GM12878 (cell line): ENCODE measurements at regions of chr12 and their contacts with region 1.

Region 1: DNA sequence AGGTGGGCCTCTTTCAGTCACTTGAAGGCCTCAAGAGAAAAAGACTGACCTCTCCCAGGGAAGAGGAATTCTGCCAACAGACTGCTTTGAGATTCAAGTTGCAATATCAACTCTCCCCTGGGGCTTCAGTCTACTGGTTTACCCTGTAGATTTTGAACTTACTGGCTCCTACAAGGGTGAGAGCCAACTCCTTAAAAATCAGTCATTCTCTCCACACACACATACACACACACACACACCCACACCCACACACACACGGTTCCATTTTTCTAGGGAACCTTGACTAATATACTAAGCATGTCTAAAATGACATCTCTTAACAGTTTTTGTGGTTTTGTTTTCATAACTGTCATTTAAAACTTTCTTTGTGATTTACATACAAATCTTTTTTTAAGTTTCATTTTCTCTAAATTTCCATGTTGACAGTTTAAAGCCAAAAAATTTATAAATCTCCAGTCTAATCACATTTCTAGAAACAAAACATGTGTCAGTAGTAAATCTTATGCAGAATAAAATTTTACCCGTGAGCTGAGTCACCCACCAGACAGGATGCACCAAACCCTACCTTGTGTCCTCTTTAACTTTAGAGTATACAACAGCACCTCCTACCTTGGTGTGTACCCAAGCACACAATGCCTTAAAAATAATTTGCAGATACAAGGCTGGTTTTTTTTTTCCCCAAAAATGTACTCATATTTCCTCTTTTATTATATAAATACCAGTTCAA is 394.6 kb downstream of the AEBP2 start:
- DNase-seq: no peak
- ATAC-seq: peak; percentile 86
- H3K4me3 ChIP-seq: no peak overlapping the region
- H3K27ac ChIP-seq: no peak overlapping the region
- H3K4me1 ChIP-seq: no peaks in the 10 kb centered on the region
- H3K27me3 ChIP-seq: no peaks in the 10 kb centered on the region
- CTCF ChIP-seq: no peak
- EP300 ChIP-seq: 0 out of 4 replicates have a peak, but pooled peaks of 1 of the 2 experiments have one; percentile 36
- POLR2A ChIP-seq: no peak
- RAD21 ChIP-seq: no peak

Region 2: GRCh38 chr12:19451196-19451595 is 382.7 kb before region 1 on chr12:
- CTCF ChIA-PET with region 1: no interaction called
- POLR2A ChIA-PET with region 1: no interaction called
- RAD21 ChIA-PET with region 1: no interaction called
- SMC1A ChIA-PET with region 1: no interaction called
- in situ Hi-C with region 1: no loop called
- intact Hi-C with region 1: no loop called
- DNase-seq: no peak
- ATAC-seq: peak; percentile 28; the same call in 2 of the 3 replicates
- H3K4me3 ChIP-seq: no peak overlapping the region
- H3K27ac ChIP-seq: no peak overlapping the region
- H3K4me1 ChIP-seq: no peaks in the 10 kb centered on the region
- H3K27me3 ChIP-seq: no peaks in the 10 kb centered on the region
- CTCF ChIP-seq: no peak
- EP300 ChIP-seq: no peak
- POLR2A ChIP-seq: no peak
- RAD21 ChIP-seq: no peak

Region 3: GRCh38 chr12:19800884-19801283 is 33.1 kb before region 1 on chr12:
- CTCF ChIA-PET with region 1: no interaction called
- POLR2A ChIA-PET with region 1: no interaction called
- RAD21 ChIA-PET with region 1: no interaction called
- SMC1A ChIA-PET with region 1: no interaction called
- in situ Hi-C with region 1: no loop called
- intact Hi-C with region 1: loop called (anchors 1 kb)
- DNase-seq: peak; percentile 48
- ATAC-seq: peak; percentile 95
- H3K4me3 ChIP-seq: no peak overlapping the region
- H3K27ac ChIP-seq: no peak overlapping the region
- H3K4me1 ChIP-seq: no peaks in the 10 kb centered on the region
- H3K27me3 ChIP-seq: no peaks in the 10 kb centered on the region
- CTCF ChIP-seq: no peak
- EP300 ChIP-seq: peak; percentile 67 to 85; a peak in 3 of 4 replicates
- POLR2A ChIP-seq: no peak
- RAD21 ChIP-seq: no peak

Region 4: GRCh38 chr12:19847294-19848059 is 13.5 kb after region 1 on chr12:
- CTCF ChIA-PET with region 1: interaction called, 3 read pairs
- POLR2A ChIA-PET with region 1: interaction called, 4 read pairs
- RAD21 ChIA-PET with region 1: no interaction called
- SMC1A ChIA-PET with region 1: interaction called, 11 read pairs
- in situ Hi-C with region 1: no loop called
- intact Hi-C with region 1: no loop called
- DNase-seq: no peak
- ATAC-seq: peak; percentile 89
- H3K4me3 ChIP-seq: no peak overlapping the region
- H3K27ac ChIP-seq: no peak overlapping the region
- H3K4me1 ChIP-seq: peaks cover 4% of the 10 kb centered on the region; the same call in 1 of the 2 replicates
- H3K27me3 ChIP-seq: no peaks in the 10 kb centered on the region
- CTCF ChIP-seq: no peak
- EP300 ChIP-seq: peak; percentile 28 to 57; a peak in 2 of 4 replicates
- POLR2A ChIP-seq: no peak
- RAD21 ChIP-seq: 0 out of 2 replicates have a peak, but pooled peaks have one; percentile 2